H1 (cell line): ENCODE measurements at regions of chr22 and their contacts with region 1.

Region 1: GRCh38 chr22:31313366-31314147 is 21.3 kb upstream of the PIK3IP1 start:
- DNase-seq: peak; percentile 41 to 90
- H3K4me3 ChIP-seq: no peak overlapping the region
- H3K27ac ChIP-seq: peak overlapping the region; percentile 86
- H3K4me1 ChIP-seq: peaks cover 2 to 5% (median 3%) of the 10 kb centered on the region in 4 experiments; a peak in 6 of 7 replicates
- H3K27me3 ChIP-seq: no peaks in the 10 kb centered on the region
- CTCF ChIP-seq: peak; percentile 69 to 87 (median 76)
- EP300 ChIP-seq: peak in 1 of 2 experiments; percentile 70; a peak in 1 of 3 replicates
- POLR2A ChIP-seq: peak in 1 of 2 experiments; percentile 62; a peak in 2 of 3 replicates
- RAD21 ChIP-seq: peak; percentile 48 to 70; a peak in 3 of 4 replicates

Region 2: GRCh38 chr22:31199183-31199582 is 114.4 kb before region 1 on chr22:
- CTCF ChIA-PET with region 1: interaction called, 11 read pairs
- POLR2A ChIA-PET with region 1: no interaction called
- DNase-seq: no peak
- H3K4me3 ChIP-seq: no peak overlapping the region
- H3K27ac ChIP-seq: no peak overlapping the region
- H3K4me1 ChIP-seq: no peaks in the 10 kb centered on the region
- H3K27me3 ChIP-seq: no peaks in the 10 kb centered on the region
- CTCF ChIP-seq: peak in 2 of 3 experiments; percentile 43 to 46; a peak in 3 of 4 replicates
- EP300 ChIP-seq: no peak
- POLR2A ChIP-seq: no peak
- RAD21 ChIP-seq: peak; percentile 49 to 62

Region 3: DNA sequence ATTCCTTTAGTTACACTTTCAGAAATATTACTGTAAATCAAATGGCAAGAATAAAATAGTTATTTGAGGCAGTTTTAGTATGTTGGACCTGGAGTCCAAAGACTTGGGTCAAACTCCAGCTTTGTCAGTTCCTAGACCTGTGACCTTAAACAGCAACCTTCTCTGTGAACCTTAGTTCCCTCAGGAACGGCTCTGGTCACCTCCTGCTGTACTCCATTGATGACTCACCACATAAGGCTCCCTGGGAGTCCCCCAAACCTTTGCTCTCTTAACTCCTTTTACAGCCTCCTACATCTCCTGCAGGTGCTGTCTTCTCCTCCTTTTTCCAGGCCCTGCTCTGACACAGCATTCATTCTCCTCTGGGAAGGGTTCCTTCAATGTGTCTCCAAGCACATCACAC is 72.4 kb before region 1 on chr22:
- CTCF ChIA-PET with region 1: no interaction called
- POLR2A ChIA-PET with region 1: no interaction called
- DNase-seq: no peak
- H3K4me3 ChIP-seq: no peak overlapping the region
- H3K27ac ChIP-seq: no peak overlapping the region
- H3K4me1 ChIP-seq: peaks cover 4 to 21% (median 6%) of the 10 kb centered on the region in 4 experiments; a peak in 4 of 7 replicates
- H3K27me3 ChIP-seq: no peaks in the 10 kb centered on the region
- CTCF ChIP-seq: no peak
- EP300 ChIP-seq: no peak
- POLR2A ChIP-seq: no peak
- RAD21 ChIP-seq: no peak

Region 4: GRCh38 chr22:31259779-31260479 is 53.6 kb before region 1 on chr22:
- CTCF ChIA-PET with region 1: no interaction called
- POLR2A ChIA-PET with region 1: no interaction called
- DNase-seq: no peak
- H3K4me3 ChIP-seq: no peak overlapping the region
- H3K27ac ChIP-seq: no peak overlapping the region
- H3K4me1 ChIP-seq: no peaks in the 10 kb centered on the region
- H3K27me3 ChIP-seq: no peaks in the 10 kb centered on the region
- CTCF ChIP-seq: no peak
- EP300 ChIP-seq: no peak
- POLR2A ChIP-seq: no peak
- RAD21 ChIP-seq: no peak

Region 5: GRCh38 chr22:31295831-31296657 is 17.5 kb before region 1 on chr22:
- CTCF ChIA-PET with region 1: interaction called, 41 read pairs
- POLR2A ChIA-PET with region 1: interaction called, 13 read pairs
- DNase-seq: no peak
- H3K4me3 ChIP-seq: no peak overlapping the region
- H3K27ac ChIP-seq: no peak overlapping the region
- H3K4me1 ChIP-seq: peaks cover 0 to 9% (median 4%) of the 10 kb centered on the region in 4 experiments; a peak in 4 of 7 replicates
- H3K27me3 ChIP-seq: peaks cover 4 to 11% (median 9%) of the 10 kb centered on the region in 4 experiments; a peak in 6 of 7 replicates
- CTCF ChIP-seq: no peak
- EP300 ChIP-seq: no peak
- POLR2A ChIP-seq: no peak
- RAD21 ChIP-seq: no peak

Region 6: DNA sequence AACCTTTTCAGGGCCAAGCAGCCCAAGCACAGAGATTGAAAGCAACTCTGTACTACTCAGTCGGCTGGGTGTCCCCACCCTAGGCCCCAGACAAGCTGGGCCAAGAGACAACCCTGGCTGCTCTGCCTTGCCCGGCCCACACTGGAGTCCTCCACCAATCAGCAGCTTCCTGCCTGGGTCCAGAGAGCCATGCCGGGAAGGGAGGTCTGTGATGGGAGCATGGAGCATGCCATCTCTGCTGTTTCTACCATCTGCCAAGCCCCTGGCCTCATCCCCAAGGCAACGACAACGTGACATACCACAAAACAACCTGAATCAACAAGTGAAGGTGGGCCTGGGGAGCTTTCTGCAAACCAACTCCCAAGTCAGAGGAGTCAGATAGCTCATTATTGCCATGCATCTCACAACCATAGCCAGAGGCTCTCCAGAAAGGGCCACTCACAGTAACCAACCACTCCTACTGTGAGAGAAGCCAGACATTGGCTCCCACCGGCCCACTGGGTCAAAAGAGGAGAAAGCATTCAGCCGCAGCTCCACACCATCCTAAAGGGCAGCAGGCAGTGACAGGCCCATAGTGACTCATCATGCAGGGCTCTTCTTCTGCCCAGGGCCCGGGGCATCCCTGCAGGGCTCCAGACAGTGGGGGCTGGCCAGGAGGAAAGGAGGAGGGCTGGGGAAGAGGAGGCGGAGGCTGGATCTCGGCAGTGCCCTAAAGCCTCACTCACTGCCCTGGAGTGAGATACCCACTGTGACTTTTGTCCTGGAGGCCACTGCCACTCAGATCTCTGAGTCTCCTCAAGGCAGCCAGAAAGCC is 14.5 kb after region 1 on chr22:
- CTCF ChIA-PET with region 1: interaction called, 17 read pairs
- POLR2A ChIA-PET with region 1: interaction called, 11 read pairs
- DNase-seq: no peak
- H3K4me3 ChIP-seq: no peak overlapping the region
- H3K27ac ChIP-seq: no peak overlapping the region
- H3K4me1 ChIP-seq: no peaks in the 10 kb centered on the region; a peak in 1 of 7 replicates
- H3K27me3 ChIP-seq: no peaks in the 10 kb centered on the region
- CTCF ChIP-seq: no peak
- EP300 ChIP-seq: no peak
- POLR2A ChIP-seq: no peak
- RAD21 ChIP-seq: no peak

Region 7: GRCh38 chr22:31345331-31346254 is 32.0 kb after region 1 on chr22:
- CTCF ChIA-PET with region 1: interaction called, 3 read pairs
- POLR2A ChIA-PET with region 1: interaction called, 14 read pairs
- DNase-seq: peak; percentile 53 to 91
- H3K4me3 ChIP-seq: peak overlapping the region; percentile 64 to 93 (median 78)
- H3K27ac ChIP-seq: peak overlapping the region; percentile 74; the same call in 1 of the 2 replicates
- H3K4me1 ChIP-seq: peaks cover 0 to 41% (median 34%) of the 10 kb centered on the region in 4 experiments; a peak in 6 of 7 replicates
- H3K27me3 ChIP-seq: no peaks in the 10 kb centered on the region
- CTCF ChIP-seq: peak; percentile 86 to 93 (median 87)
- EP300 ChIP-seq: peak in 1 of 2 experiments; percentile 48; a peak in 1 of 3 replicates
- POLR2A ChIP-seq: peak; percentile 50 to 71
- RAD21 ChIP-seq: peak; percentile 40 to 71

Region 8: GRCh38 chr22:31361743-31362142 is 48.2 kb after region 1 on chr22:
- CTCF ChIA-PET with region 1: no interaction called
- POLR2A ChIA-PET with region 1: no interaction called
- DNase-seq: no peak
- H3K4me3 ChIP-seq: no peak overlapping the region
- H3K27ac ChIP-seq: no peak overlapping the region
- H3K4me1 ChIP-seq: no peaks in the 10 kb centered on the region
- H3K27me3 ChIP-seq: no peaks in the 10 kb centered on the region
- CTCF ChIP-seq: no peak
- EP300 ChIP-seq: no peak
- POLR2A ChIP-seq: no peak
- RAD21 ChIP-seq: no peak

Region 9: GRCh38 chr22:31489604-31490495 is 176.3 kb after region 1 on chr22 and contains the start of gene EIF4ENIF1:
- CTCF ChIA-PET with region 1: no interaction called
- POLR2A ChIA-PET with region 1: no interaction called
- DNase-seq: peak in 1 of 2 experiments; percentile 83
- H3K4me3 ChIP-seq: peak within 1 kb of the TSS; percentile 77 to 92 (median 80)
- H3K27ac ChIP-seq: peak within 1 kb of the TSS; percentile 45
- H3K4me1 ChIP-seq: peaks cover 1 to 11% (median 11%) of the 10 kb centered on the region in 4 experiments; a peak in 4 of 7 replicates
- H3K27me3 ChIP-seq: peaks cover 0 to 5% (median 2%) of the 10 kb centered on the region in 4 experiments; a peak in 1 of 7 replicates
- CTCF ChIP-seq: no peak
- EP300 ChIP-seq: peak in 1 of 2 experiments; percentile 10; a peak in 1 of 3 replicates
- POLR2A ChIP-seq: no peak
- RAD21 ChIP-seq: no peak
- total RNA-seq, gene EIF4ENIF1: 23.2 and 23.6 TPM in 2 replicates